B cell (primary cell): ENCODE measurements at regions of chr21 and their contacts with region 1.

Region 1: GRCh38 chr21:29195981-29196669 is 65.7 kb downstream of the MAP3K7CL start:
- DNase-seq: peak; percentile 92
- ATAC-seq: peak; percentile 97
- H3K4me3 ChIP-seq: peak overlapping the region; percentile 13 to 67 (median 36)
- H3K4me3 Mint-ChIP-seq: peak overlapping the region; percentile 79
- H3K27ac ChIP-seq: peak overlapping the region; percentile 72 to 87
- H3K27ac Mint-ChIP-seq: peak overlapping the region; percentile 94
- H3K4me1 ChIP-seq: peaks cover 17 to 22% of the 10 kb centered on the region in 2 donors
- H3K4me1 Mint-ChIP-seq: peaks cover 39% of the 10 kb centered on the region
- H3K27me3 ChIP-seq: no peaks in the 10 kb centered on the region
- H3K27me3 Mint-ChIP-seq: no peaks in the 10 kb centered on the region
- CTCF ChIP-seq: peak; percentile 75

Region 2: DNA sequence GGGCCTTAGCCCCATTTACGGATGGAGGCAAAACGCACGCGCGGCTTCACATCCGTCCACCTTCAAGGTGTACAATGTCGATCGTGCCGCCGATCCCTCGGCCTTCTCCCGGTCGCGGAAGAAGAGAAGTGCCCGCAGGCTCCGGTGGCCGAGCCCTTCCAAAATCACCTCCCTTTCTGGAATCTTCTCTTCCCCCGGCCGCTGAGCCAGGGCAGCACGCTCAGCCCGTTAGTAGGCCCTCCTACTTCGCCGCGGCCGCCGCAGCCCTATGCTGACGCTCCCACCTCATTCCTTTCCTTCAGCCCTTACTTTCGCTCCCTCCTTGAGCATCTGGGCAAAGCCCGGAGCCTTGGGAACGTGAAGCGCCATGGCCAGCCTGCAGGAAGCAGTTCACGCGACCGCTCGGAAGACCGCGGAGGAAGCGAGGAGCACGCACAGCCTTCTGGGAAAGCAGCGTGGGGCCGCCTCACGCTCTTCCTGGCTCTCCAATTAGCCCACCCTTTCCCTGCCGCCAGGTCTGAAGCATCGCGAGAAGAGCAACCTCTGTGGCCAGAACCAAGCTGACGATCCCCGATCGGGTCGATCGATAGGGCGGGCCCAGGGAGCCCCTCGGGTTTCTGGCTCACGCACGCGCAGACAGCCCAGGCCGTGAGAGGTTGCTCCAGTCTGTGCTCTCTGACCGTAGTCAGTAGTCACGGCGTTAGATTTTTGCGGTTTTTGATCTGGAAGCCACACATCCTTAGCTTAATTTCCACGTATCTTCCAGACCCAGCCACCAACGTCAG is 122.7 kb before region 1 on chr21 and contains the start of gene CCT8:
- CTCF ChIA-PET with region 1: no interaction called
- POLR2A ChIA-PET with region 1: no interaction called
- intact Hi-C with region 1: loop called (anchors 1 kb)
- DNase-seq: peak; percentile 99
- ATAC-seq: peak; percentile 91
- H3K4me3 ChIP-seq: peak within 1 kb of the TSS; percentile 72 to 99 (median 98)
- H3K4me3 Mint-ChIP-seq: peak within 1 kb of the TSS; percentile 99
- H3K27ac ChIP-seq: peak within 1 kb of the TSS; percentile 80 to 86
- H3K27ac Mint-ChIP-seq: peak within 1 kb of the TSS; percentile 96
- H3K4me1 ChIP-seq: peaks cover 27 to 33% of the 10 kb centered on the region in 2 donors
- H3K4me1 Mint-ChIP-seq: peaks cover 57% of the 10 kb centered on the region
- H3K27me3 ChIP-seq: no peaks in the 10 kb centered on the region
- H3K27me3 Mint-ChIP-seq: no peaks in the 10 kb centered on the region
- CTCF ChIP-seq: no peak
- total RNA-seq, gene CCT8: 92.8 and 100 TPM in 2 replicates

Region 3: GRCh38 chr21:29208682-29209059 is 12.5 kb after region 1 on chr21:
- CTCF ChIA-PET with region 1: interaction called, 5 read pairs
- POLR2A ChIA-PET with region 1: no interaction called
- intact Hi-C with region 1: loop called (anchors 2 kb)
- DNase-seq: peak; percentile 40
- ATAC-seq: peak; percentile 28
- H3K4me3 ChIP-seq: peak overlapping the region in 1 of 5 experiments; percentile 41
- H3K4me3 Mint-ChIP-seq: peak overlapping the region; percentile 62
- H3K27ac ChIP-seq: peak overlapping the region; percentile 30 to 44
- H3K27ac Mint-ChIP-seq: peak overlapping the region; percentile 80
- H3K4me1 ChIP-seq: peaks cover 14 to 15% of the 10 kb centered on the region in 2 donors
- H3K4me1 Mint-ChIP-seq: peaks cover 17% of the 10 kb centered on the region
- H3K27me3 ChIP-seq: no peaks in the 10 kb centered on the region
- H3K27me3 Mint-ChIP-seq: no peaks in the 10 kb centered on the region
- CTCF ChIP-seq: no peak

Region 4: GRCh38 chr21:29232601-29233546 is 36.7 kb after region 1 on chr21:
- CTCF ChIA-PET with region 1: interaction called, 3 read pairs
- POLR2A ChIA-PET with region 1: no interaction called
- intact Hi-C with region 1: loop called (anchors 1 kb)
- DNase-seq: peak; percentile 74
- ATAC-seq: peak; percentile 28
- H3K4me3 ChIP-seq: peak overlapping the region in 1 of 5 experiments; percentile 8
- H3K4me3 Mint-ChIP-seq: peak overlapping the region; percentile 71
- H3K27ac ChIP-seq: peak overlapping the region; percentile 60 to 81
- H3K27ac Mint-ChIP-seq: peak overlapping the region; percentile 83
- H3K4me1 ChIP-seq: peaks cover 43 to 47% of the 10 kb centered on the region in 2 donors
- H3K4me1 Mint-ChIP-seq: peaks cover 65% of the 10 kb centered on the region
- H3K27me3 ChIP-seq: no peaks in the 10 kb centered on the region
- H3K27me3 Mint-ChIP-seq: no peaks in the 10 kb centered on the region
- CTCF ChIP-seq: peak; percentile 50

Region 5: DNA sequence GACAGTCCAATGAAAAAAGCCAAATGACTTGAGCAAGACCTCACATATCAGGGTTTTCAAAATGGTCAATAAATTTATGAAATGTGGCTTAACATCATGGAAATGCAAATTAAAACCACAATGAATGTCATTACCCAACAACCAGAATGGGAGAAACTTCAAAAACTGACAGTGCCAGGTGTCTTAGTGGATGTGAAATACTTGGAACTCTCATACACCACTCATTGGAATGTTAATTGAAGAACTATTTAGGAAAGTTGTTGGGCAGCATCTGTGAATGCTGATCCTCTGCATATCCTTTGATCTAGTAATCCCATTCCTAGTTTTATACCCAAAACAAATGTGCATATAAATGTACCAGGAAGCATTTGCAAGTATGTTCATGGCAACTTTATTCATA is 83.4 kb after region 1 on chr21:
- CTCF ChIA-PET with region 1: no interaction called
- POLR2A ChIA-PET with region 1: no interaction called
- intact Hi-C with region 1: no loop called
- DNase-seq: no peak
- ATAC-seq: no peak
- H3K4me3 ChIP-seq: no peak overlapping the region
- H3K4me3 Mint-ChIP-seq: no peak overlapping the region
- H3K27ac ChIP-seq: no peak overlapping the region
- H3K27ac Mint-ChIP-seq: no peak overlapping the region
- H3K4me1 ChIP-seq: no peaks in the 10 kb centered on the region
- H3K4me1 Mint-ChIP-seq: no peaks in the 10 kb centered on the region
- H3K27me3 ChIP-seq: no peaks in the 10 kb centered on the region
- H3K27me3 Mint-ChIP-seq: no peaks in the 10 kb centered on the region
- CTCF ChIP-seq: no peak

Region 6: GRCh38 chr21:29293495-29293894 is 97.4 kb after region 1 on chr21:
- CTCF ChIA-PET with region 1: interaction called, 7 read pairs
- POLR2A ChIA-PET with region 1: interaction called, 4 read pairs
- intact Hi-C with region 1: loop called (anchors 1 kb)
- DNase-seq: peak; percentile 91
- ATAC-seq: peak; percentile 95
- H3K4me3 ChIP-seq: no peak overlapping the region
- H3K4me3 Mint-ChIP-seq: peak overlapping the region; percentile 33
- H3K27ac ChIP-seq: peak overlapping the region; percentile 72 to 77
- H3K27ac Mint-ChIP-seq: peak overlapping the region; percentile 93
- H3K4me1 ChIP-seq: peaks cover 29 to 30% of the 10 kb centered on the region in 2 donors
- H3K4me1 Mint-ChIP-seq: peaks cover 43% of the 10 kb centered on the region
- H3K27me3 ChIP-seq: no peaks in the 10 kb centered on the region
- H3K27me3 Mint-ChIP-seq: no peaks in the 10 kb centered on the region
- CTCF ChIP-seq: no peak

Region 7: GRCh38 chr21:29449306-29449950 is 253.3 kb after region 1 on chr21:
- CTCF ChIA-PET with region 1: no interaction called
- POLR2A ChIA-PET with region 1: no interaction called
- intact Hi-C with region 1: no loop called
- DNase-seq: no peak
- ATAC-seq: no peak
- H3K4me3 ChIP-seq: no peak overlapping the region
- H3K4me3 Mint-ChIP-seq: no peak overlapping the region
- H3K27ac ChIP-seq: no peak overlapping the region
- H3K27ac Mint-ChIP-seq: no peak overlapping the region
- H3K4me1 ChIP-seq: no peaks in the 10 kb centered on the region
- H3K4me1 Mint-ChIP-seq: peaks cover 8% of the 10 kb centered on the region
- H3K27me3 ChIP-seq: no peaks in the 10 kb centered on the region
- H3K27me3 Mint-ChIP-seq: no peaks in the 10 kb centered on the region
- CTCF ChIP-seq: no peak